ENCODE measurements at regions of chr12 and their contacts with region 1.

Region 1: DNA sequence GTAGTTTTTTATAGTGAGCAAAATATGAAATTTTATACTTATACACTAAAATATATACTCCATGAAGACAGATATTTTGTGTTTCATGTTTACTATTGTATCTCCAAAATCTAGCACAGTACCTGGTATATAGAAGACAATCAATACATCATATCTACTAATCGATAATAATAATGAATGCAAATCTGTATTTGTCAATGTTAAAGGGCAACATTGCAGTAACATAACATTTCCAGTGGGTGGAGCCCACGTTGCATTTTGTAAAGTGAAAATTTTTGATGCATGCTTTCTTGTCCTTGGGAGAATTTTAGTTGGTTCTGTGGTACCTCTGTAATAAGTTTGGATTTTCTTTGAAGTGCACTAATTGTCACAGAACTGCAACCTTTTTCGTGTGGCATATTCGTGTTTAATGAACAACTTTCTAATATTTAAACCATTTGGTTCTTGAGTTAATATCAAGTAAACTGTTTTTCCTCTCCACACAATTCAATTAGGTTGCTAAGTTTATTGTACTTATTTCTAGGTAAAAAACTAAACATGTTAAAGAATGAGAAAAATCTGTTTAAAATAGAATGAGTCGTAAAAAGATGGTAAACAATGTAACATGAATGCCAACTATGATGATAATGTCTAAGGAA is 47.4 kb downstream of the AVPR1A start:
- DNase-seq: peak; percentile 11
- H3K4me3 Mint-ChIP-seq: no peak overlapping the region
- H3K27ac Mint-ChIP-seq: no peak overlapping the region
- H3K4me1 Mint-ChIP-seq: no peaks in the 10 kb centered on the region
- H3K27me3 Mint-ChIP-seq: peaks cover 6% of the 10 kb centered on the region

Region 2: GRCh38 chr12:63276537-63277365 is 173.1 kb after region 1 on chr12:
- CTCF ChIA-PET with region 1: no interaction called
- intact Hi-C with region 1: loop called (anchors 2 kb)
- DNase-seq: peak; percentile 13
- H3K4me3 Mint-ChIP-seq: no peak overlapping the region
- H3K27ac Mint-ChIP-seq: no peak overlapping the region
- H3K4me1 Mint-ChIP-seq: no peaks in the 10 kb centered on the region
- H3K27me3 Mint-ChIP-seq: peaks cover 2% of the 10 kb centered on the region

Region 3: GRCh38 chr12:63420206-63420644 is 316.6 kb after region 1 on chr12:
- CTCF ChIA-PET with region 1: no interaction called
- intact Hi-C with region 1: loop called (anchors 10 kb)
- DNase-seq: peak; percentile 45
- H3K4me3 Mint-ChIP-seq: no peak overlapping the region
- H3K27ac Mint-ChIP-seq: no peak overlapping the region
- H3K4me1 Mint-ChIP-seq: no peaks in the 10 kb centered on the region
- H3K27me3 Mint-ChIP-seq: no peaks in the 10 kb centered on the region

Region 4: GRCh38 chr12:63668028-63668799 is 564.6 kb after region 1 on chr12 and contains the start of gene DPY19L2:
- CTCF ChIA-PET with region 1: no interaction called
- intact Hi-C with region 1: loop called (anchors 5 kb)
- DNase-seq: peak; percentile 69
- H3K4me3 Mint-ChIP-seq: peak within 1 kb of the TSS; percentile 79
- H3K27ac Mint-ChIP-seq: peak within 1 kb of the TSS; percentile 36
- H3K4me1 Mint-ChIP-seq: peaks cover 10% of the 10 kb centered on the region
- H3K27me3 Mint-ChIP-seq: peaks cover 29% of the 10 kb centered on the region
- total RNA-seq, gene DPY19L2: 0.91 to 1.1 TPM

Region 5: GRCh38 chr12:63802012-63802608 is 698.5 kb after region 1 on chr12:
- CTCF ChIA-PET with region 1: no interaction called
- intact Hi-C with region 1: loop called (anchors 1 kb)
- DNase-seq: no peak
- H3K4me3 Mint-ChIP-seq: no peak overlapping the region
- H3K27ac Mint-ChIP-seq: no peak overlapping the region
- H3K4me1 Mint-ChIP-seq: peaks cover 2% of the 10 kb centered on the region
- H3K27me3 Mint-ChIP-seq: no peaks in the 10 kb centered on the region